ENCODE measurements at regions of chr15 and their contacts with region 1.

Region 1: DNA sequence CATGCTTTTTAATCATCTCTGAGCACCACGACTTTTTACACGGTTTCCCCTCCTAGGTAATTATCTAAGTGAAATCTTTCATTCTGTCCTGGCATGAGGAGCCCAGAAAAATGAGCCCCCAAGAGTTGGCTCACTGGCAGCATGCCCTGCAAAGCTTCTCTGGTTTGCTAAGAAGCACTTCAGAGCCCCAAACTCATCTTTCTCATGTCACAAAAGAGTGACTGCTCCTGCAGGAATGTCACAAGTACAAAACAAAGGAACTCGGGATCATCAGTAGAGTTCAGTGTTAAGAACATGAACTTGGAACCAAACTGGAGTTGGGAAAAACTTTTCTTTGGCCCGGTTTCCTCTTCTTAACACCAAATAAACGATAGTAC is 123.9 kb downstream of the FOXB1 start:
- DNase-seq: no peak
- H3K4me3 ChIP-seq: peak overlapping the region; percentile 43 to 58 (median 46)
- H3K27ac ChIP-seq: peak overlapping the region; percentile 57
- H3K4me1 ChIP-seq: peaks cover 4% of the 10 kb centered on the region
- H3K27me3 ChIP-seq: no peaks in the 10 kb centered on the region
- CTCF ChIP-seq: no peak

Region 2: DNA sequence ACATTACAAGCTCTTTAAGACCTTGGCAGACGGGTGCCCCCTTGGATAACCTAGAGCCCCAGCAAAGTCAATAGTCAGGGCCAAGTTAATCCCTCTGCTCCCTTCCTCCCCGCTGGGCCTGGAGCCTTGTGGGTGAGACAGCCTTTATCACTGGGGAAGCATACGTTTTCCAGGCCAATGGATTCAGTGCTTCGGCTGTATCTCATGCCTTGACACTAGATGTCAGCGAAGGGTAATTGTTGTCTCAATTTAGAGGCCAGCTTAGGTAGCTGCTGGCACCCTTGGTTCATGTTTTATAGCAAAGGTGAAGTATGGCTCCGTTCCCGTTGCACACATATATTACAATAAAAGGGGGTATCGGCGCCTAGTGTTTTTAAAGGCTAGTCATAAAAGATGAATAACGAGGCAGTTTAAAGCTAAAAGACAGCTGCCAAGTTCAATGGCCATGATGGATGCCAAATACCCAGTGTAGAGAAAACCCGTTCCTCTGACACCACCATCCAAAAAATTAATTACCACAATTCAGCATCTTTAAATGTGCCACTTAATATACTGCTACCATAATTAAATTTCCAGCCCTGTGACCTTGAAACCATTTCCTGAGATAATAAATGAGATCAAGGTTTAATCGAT is 386.6 kb before region 1 on chr15:
- CTCF ChIA-PET with region 1: no interaction called
- dilution Hi-C with region 1: no loop called
- in situ Hi-C with region 1: no loop called
- intact Hi-C with region 1: loop called (anchors 5 kb)
- DNase-seq: peak; percentile 13
- H3K4me3 ChIP-seq: no peak overlapping the region
- H3K27ac ChIP-seq: no peak overlapping the region
- H3K4me1 ChIP-seq: no peaks in the 10 kb centered on the region
- H3K27me3 ChIP-seq: no peaks in the 10 kb centered on the region
- CTCF ChIP-seq: peak; percentile 27 to 56

Region 3: GRCh38 chr15:59997070-59997701 is 130.8 kb before region 1 on chr15:
- CTCF ChIA-PET with region 1: no interaction called
- dilution Hi-C with region 1: no loop called
- in situ Hi-C with region 1: no loop called
- intact Hi-C with region 1: loop called (anchors 1 kb)
- DNase-seq: peak; percentile 38
- H3K4me3 ChIP-seq: no peak overlapping the region
- H3K27ac ChIP-seq: no peak overlapping the region
- H3K4me1 ChIP-seq: peaks cover 8% of the 10 kb centered on the region
- H3K27me3 ChIP-seq: peaks cover 91% of the 10 kb centered on the region
- CTCF ChIP-seq: peak in 1 of 2 donors; percentile 32

Region 4: GRCh38 chr15:60044636-60045270 is 83.2 kb before region 1 on chr15:
- CTCF ChIA-PET with region 1: interaction called, 17 read pairs
- dilution Hi-C with region 1: no loop called
- in situ Hi-C with region 1: no loop called
- intact Hi-C with region 1: no loop called
- DNase-seq: no peak
- H3K4me3 ChIP-seq: no peak overlapping the region
- H3K27ac ChIP-seq: no peak overlapping the region
- H3K4me1 ChIP-seq: peaks cover 3% of the 10 kb centered on the region
- H3K27me3 ChIP-seq: no peaks in the 10 kb centered on the region
- CTCF ChIP-seq: no peak

Measured in mammary epithelial cell (primary cell).